ENCODE measurements at regions of chr1 and their contacts with region 1.

Region 1: DNA sequence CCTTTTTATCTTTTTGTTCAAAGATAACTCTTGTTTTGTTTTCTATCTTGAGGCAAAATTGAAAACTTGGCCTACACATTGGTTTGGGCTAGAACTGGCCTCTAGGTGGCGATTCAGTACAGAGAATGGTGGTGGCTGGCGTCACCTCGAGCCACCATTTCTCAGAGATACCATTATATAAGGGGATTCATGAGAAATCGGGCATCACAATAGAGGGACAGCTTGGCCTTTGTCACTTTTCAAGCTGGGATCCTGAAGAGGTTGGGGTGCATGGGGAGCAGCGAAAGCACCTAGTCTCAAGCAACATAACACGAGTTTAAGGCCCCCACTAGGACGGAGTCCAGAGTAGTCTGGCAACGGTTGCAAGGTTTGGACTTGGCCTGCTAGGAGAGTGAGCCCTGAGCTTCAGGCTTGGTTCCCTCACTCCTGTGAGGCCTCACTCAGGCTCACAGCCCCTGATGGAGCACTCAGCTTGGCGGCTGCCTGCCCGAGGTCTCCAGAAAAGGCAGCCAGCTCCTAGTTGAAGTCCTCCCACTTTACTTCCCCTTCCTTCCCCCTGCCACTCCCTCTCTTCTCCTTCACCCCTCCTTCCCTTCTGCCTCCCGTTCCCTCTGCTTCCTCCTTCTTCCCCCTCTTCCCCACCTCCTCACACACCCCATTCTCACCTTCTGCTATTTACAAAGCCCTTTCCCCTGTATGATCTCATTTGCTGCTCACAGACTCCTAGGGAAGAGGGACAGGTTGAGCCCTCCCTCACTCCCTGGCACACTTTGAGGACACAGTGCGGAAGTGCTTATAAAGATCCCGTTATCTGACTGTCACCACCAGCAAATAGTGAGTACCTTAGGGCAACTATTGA is 67.8 kb downstream of the LRIG2 start:
- DNase-seq: peak; percentile 29 to 68
- H3K4me3 ChIP-seq: 0 out of 8 replicates have a peak overlapping the region, but pooled peaks of 1 of the 4 experiments have one; percentile 7
- H3K27ac ChIP-seq: no peak overlapping the region
- H3K4me1 ChIP-seq: peaks cover 0 to 9% (median 3%) of the 10 kb centered on the region in 4 experiments; a peak in 4 of 7 replicates
- H3K27me3 ChIP-seq: no peaks in the 10 kb centered on the region
- CTCF ChIP-seq: peak; percentile 73 to 88 (median 86)
- EP300 ChIP-seq: no peak
- POLR2A ChIP-seq: no peak
- RAD21 ChIP-seq: peak; percentile 98

Region 2: DNA sequence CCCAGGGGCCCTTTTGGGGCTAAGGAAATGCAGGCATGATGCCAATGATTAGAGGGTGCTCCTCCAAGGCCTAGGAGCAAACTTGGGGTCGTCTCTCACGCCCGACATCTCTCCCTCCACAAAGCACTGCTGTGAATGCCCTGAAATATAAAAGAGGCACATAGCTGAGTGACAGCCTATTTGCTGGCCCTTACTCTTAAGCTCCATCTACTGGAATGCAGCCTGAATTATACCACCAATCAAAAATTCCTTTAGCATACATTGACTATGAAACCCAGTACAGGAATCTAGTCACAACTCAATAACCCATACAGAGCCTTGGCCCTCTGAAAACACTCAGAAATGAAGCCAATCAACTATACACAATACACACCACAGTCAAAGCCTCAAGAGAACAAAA is 37.7 kb after region 1 on chr1:
- CTCF ChIA-PET with region 1: interaction called, 25 read pairs
- POLR2A ChIA-PET with region 1: no interaction called
- DNase-seq: no peak
- H3K4me3 ChIP-seq: no peak overlapping the region
- H3K27ac ChIP-seq: no peak overlapping the region
- H3K4me1 ChIP-seq: no peaks in the 10 kb centered on the region
- H3K27me3 ChIP-seq: no peaks in the 10 kb centered on the region
- CTCF ChIP-seq: no peak
- EP300 ChIP-seq: no peak
- POLR2A ChIP-seq: no peak
- RAD21 ChIP-seq: peak; percentile 12 to 31; a peak in 2 of 4 replicates

Region 3: GRCh38 chr1:113677250-113678158 is 536.7 kb after region 1 on chr1:
- CTCF ChIA-PET with region 1: interaction called, 12 read pairs
- POLR2A ChIA-PET with region 1: interaction called, 4 read pairs
- DNase-seq: no peak
- H3K4me3 ChIP-seq: no peak overlapping the region
- H3K27ac ChIP-seq: no peak overlapping the region
- H3K4me1 ChIP-seq: peaks cover 0 to 3% (median 0%) of the 10 kb centered on the region in 4 experiments; a peak in 1 of 7 replicates
- H3K27me3 ChIP-seq: no peaks in the 10 kb centered on the region
- CTCF ChIP-seq: peak in 2 of 3 experiments; percentile 42 to 63; a peak in 3 of 4 replicates
- EP300 ChIP-seq: no peak
- POLR2A ChIP-seq: no peak
- RAD21 ChIP-seq: peak; percentile 83 to 84